Thyroid gland (tissue), 4 donors: ENCODE measurements at regions of chr3 and their contacts with region 1.

Region 1: DNA sequence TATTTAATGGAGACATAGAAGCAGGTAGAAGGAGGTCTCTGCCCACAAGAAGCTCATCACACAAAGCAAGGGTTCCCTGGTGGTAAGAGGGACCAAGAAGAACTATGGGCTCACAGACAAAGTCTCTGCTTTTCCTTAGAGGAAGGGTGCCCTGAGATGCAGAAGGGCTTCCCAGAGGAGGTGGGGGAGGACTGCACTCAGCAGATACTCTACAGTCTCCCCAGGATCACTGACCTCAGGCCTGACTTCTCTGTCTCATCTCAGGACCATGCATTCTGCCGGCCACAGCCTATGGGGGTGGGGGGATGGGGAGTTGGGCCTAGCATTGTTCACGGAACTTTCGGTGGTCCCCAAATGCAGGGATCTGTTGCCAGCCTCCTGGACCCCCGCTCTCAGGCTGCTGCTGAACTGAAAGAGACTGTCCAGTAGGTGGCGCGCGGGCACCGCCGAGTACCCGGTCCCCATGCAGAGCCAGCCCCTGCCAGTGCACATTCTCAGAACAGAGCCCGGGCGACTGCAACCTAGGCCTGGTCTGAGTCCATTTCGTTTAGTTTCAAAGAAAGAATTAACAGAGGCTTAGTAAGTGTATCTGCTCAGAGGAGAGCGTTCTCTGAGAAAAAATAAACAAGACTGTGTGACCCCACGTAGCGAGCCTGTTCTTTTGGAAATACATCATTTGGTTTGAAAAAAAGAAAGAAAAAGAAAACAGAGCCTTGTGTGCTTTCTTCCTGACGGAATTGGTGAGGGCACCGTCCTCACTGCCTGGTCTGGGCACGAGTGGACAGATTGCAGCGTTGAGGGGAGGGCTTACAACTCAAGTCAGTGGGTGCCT is 74.1 kb downstream of the LRTM1 start:
- DNase-seq: peak; percentile 86 to 91
- H3K4me3 ChIP-seq: no peak overlapping the region
- H3K27ac ChIP-seq: no peak overlapping the region
- H3K4me1 ChIP-seq: peaks cover 0 to 6% of the 10 kb centered on the region in 2 donors
- H3K27me3 ChIP-seq: no peaks in the 10 kb centered on the region
- CTCF ChIP-seq: peak; percentile 71 to 90 (median 84)
- POLR2A ChIP-seq: no peak

Region 2: GRCh38 chr3:54681706-54682105 is 172.1 kb before region 1 on chr3:
- intact Hi-C with region 1: no loop called
- DNase-seq: no peak
- H3K4me3 ChIP-seq: no peak overlapping the region
- H3K27ac ChIP-seq: no peak overlapping the region
- H3K4me1 ChIP-seq: no peaks in the 10 kb centered on the region
- H3K27me3 ChIP-seq: no peaks in the 10 kb centered on the region
- CTCF ChIP-seq: no peak
- POLR2A ChIP-seq: no peak

Region 3: GRCh38 chr3:55180936-55181535 is 327.2 kb after region 1 on chr3:
- intact Hi-C with region 1: loop called (anchors 10 kb)
- DNase-seq: peak; percentile 30
- H3K4me3 ChIP-seq: no peak overlapping the region
- H3K27ac ChIP-seq: no peak overlapping the region
- H3K4me1 ChIP-seq: no peaks in the 10 kb centered on the region
- H3K27me3 ChIP-seq: no peaks in the 10 kb centered on the region
- CTCF ChIP-seq: peak; percentile 44 to 84 (median 60)
- POLR2A ChIP-seq: no peak

Region 4: DNA sequence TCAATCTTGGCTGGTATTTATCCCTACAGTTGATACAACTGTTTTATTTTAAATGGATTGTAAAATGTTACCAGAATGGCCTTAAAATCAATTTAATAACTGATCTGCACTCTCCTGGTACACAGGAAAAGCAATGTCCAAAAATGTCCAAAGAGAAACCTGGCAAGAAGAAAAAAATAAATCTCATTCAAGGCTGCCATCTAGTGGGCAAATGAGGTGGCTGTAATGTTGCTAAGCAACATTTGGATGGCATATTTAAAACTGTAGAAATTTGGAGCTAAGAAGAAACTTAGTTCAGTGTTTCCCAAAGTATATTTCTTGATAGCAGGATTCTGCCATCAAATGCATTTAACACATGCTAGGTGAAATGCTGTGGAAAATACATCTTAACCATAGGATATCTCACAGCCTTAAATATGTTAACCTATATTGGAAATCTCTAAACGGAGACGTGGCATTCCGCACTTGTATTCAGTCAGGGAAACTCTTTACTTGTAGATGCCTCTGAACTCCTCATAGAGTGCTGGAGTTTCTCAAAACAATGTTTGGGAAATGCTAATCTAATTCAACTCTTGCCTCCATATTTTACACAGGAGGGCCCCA is 1397.7 kb after region 1 on chr3:
- intact Hi-C with region 1: loop called (anchors 10 kb)
- DNase-seq: peak; percentile 37 to 38
- H3K4me3 ChIP-seq: no peak overlapping the region
- H3K27ac ChIP-seq: no peak overlapping the region
- H3K4me1 ChIP-seq: no peaks in the 10 kb centered on the region
- H3K27me3 ChIP-seq: no peaks in the 10 kb centered on the region
- CTCF ChIP-seq: peak; percentile 39 to 83 (median 77)
- POLR2A ChIP-seq: no peak